AG04450 (cell line): ENCODE measurements at regions of chr11 and their contacts with region 1.

Region 1: DNA sequence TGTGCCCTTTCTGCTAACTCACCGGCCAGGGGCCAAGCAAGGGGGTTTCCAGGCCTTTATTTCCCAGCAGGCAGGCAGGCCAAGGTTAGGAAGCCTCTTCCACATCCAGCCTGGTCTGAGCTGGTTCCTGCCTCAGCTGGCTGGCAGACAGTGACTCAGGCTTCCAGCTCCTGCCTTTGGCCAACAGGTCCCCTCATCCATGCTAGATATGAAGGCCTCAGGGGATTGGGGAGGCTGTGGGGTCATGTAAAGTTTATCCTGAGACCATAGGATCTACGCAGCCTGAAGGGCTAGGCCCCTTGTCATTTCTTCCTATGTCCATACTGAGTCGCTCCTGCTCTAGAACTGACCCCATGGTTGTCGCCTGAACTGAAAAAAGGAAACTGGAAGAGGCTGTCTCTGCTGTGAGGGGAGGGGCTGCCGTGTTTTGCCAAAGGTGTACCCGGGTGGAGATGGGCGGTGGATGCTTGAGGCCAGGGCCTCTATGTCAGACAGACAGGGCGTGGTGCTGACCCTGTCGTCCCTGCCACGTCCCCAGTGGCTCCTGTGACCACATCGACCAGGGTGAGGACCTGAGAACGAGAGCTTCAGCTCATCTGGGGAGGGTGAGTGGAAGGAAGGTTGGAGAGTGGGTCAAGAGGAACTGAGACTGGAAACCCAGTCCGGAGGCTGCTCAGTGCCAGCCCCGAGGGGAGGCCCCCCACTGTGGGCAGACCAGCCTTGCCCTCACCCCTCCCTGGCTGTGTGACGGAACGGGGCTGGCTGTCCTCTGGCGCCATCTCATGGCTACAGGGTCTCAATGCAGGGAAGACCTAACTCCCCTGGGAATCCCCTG is 17.0 kb downstream of the P2RY6 start:
- DNase-seq: no peak
- H3K4me3 ChIP-seq: no peak overlapping the region
- H3K27ac ChIP-seq: no peak overlapping the region
- H3K27me3 ChIP-seq: no peaks in the 10 kb centered on the region
- CTCF ChIP-seq: peak; percentile 99

Region 2: DNA sequence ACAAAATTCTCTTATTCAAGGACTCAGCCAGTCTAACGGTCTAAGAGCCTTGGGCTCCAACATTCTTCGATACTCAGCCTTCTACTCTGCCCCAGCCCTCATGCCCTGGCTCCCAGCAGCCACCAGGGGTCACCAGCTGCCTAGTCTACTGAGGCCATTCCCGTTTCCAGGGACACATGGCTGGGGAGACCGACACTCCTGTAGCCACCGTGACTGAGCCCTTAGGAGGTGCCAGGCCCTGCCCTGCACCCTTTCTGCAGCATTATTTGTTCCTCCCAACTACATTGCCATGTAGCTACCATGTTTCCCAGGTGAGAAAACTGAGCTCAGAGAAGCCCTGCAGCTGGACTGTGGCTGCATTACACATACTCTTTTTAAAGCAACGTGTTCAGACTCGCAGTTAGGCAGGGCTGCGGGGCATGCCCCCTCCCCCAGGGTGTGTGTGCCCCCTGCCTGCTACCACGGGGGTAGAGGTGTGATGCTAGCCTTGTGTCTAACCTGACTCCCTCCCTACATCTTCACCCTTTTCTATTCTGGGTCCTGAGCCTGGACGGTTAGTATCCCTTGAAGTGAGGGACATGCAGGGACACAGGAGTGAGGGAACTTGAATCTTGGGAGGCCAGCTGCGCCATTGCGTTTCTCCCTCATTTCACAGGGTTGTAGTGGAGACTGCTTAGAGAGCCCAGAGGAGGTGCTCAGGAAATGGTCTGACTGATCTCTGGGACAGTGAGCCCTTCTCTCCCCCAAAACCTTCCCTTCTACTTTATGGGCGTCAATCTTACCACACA is 457.4 kb before region 1 on chr11:
- CTCF ChIA-PET with region 1: interaction called, 12 read pairs
- POLR2A ChIA-PET with region 1: no interaction called
- DNase-seq: no peak
- H3K4me3 ChIP-seq: no peak overlapping the region
- H3K27ac ChIP-seq: no peak overlapping the region
- H3K27me3 ChIP-seq: no peaks in the 10 kb centered on the region
- CTCF ChIP-seq: peak; percentile 98

Region 3: GRCh38 chr11:73218106-73218829 is 70.8 kb before region 1 on chr11 and contains the start of gene P2RY2:
- CTCF ChIA-PET with region 1: no interaction called
- POLR2A ChIA-PET with region 1: no interaction called
- DNase-seq: no peak
- H3K4me3 ChIP-seq: peak within 1 kb of the TSS; percentile 39
- H3K27ac ChIP-seq: no peak within 1 kb of the TSS
- H3K27me3 ChIP-seq: peaks cover 43% of the 10 kb centered on the region
- CTCF ChIP-seq: peak; percentile 49
- polyA plus RNA-seq, gene P2RY2: not detected in 2 replicates

Region 4: GRCh38 chr11:73271936-73272719 is 17.0 kb before region 1 on chr11 and contains the start of gene P2RY6:
- CTCF ChIA-PET with region 1: interaction called, 13 read pairs
- POLR2A ChIA-PET with region 1: no interaction called
- DNase-seq: no peak
- H3K4me3 ChIP-seq: no peak within 1 kb of the TSS
- H3K27ac ChIP-seq: no peak within 1 kb of the TSS
- H3K27me3 ChIP-seq: peaks cover 29% of the 10 kb centered on the region
- CTCF ChIP-seq: no peak
- polyA plus RNA-seq, gene P2RY6: not detected in 2 replicates